Left ventricle myocardium inferior (tissue), 1 donor: ENCODE measurements at regions of chr11 and their contacts with region 1.

Region 1: GRCh38 chr11:27698872-27699474 is 1.3 kb downstream of the BDNF start:
- DNase-seq: peak; percentile 79
- H3K4me3 ChIP-seq: peak overlapping the region; percentile 75
- H3K27ac ChIP-seq: peak overlapping the region; percentile 67
- H3K4me1 ChIP-seq: peaks cover 38% of the 10 kb centered on the region
- H3K27me3 ChIP-seq: peaks cover 63% of the 10 kb centered on the region
- CTCF ChIP-seq: peak; percentile 83

Region 2: DNA sequence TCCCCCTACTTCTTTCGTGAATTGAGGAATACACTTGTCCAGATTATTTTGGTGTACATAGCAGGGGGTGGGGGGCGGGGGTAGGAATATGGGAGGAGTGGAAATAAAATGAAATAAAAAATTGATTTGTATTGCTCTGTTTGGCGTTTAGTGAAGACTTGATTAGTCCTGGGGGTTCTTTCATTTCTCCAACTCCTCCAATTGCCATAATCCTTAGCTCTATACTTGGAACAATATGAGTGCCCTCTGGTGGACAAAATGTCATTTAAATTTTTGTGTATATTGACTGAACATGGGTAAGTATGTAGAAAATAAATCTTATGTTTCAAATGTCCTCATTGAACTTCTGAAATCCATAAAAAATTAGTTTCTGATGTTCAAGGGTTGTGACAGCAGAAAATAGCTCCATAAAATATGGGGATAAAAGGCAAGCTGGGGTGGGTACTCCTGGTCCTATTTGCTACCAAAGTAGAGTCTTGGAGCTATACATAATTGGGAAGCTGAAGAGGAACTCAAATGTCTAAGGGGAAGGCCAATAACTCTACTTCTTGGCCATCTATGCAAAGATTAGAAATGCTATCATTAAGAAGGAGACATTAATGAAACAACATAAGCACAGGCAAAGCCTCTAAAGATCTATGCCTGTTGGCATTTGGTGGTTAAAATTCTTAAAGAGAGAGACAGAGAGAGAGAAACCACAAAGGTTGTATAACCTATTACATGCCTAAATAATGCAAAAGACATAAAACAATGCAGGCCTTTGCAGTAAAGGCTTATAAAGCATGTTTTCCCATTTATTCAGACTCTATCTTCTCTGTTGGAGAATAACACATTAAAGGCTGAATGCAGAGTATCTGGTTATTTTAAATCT is 830.8 kb after region 1 on chr11:
- intact Hi-C with region 1: loop called (anchors 5 kb)
- DNase-seq: no peak
- H3K4me3 ChIP-seq: no peak overlapping the region
- H3K27ac ChIP-seq: no peak overlapping the region
- H3K4me1 ChIP-seq: no peaks in the 10 kb centered on the region
- H3K27me3 ChIP-seq: no peaks in the 10 kb centered on the region
- CTCF ChIP-seq: peak; percentile 58